HCT116 (cell line): ENCODE measurements at regions of chr2 and their contacts with region 1.

Region 1: GRCh38 chr2:96554293-96555145 is 18.0 kb downstream of the ARID5A start:
- DNase-seq: peak; percentile 26
- ATAC-seq: peak; percentile 39
- H3K4me3 ChIP-seq: no peak overlapping the region
- H3K27ac ChIP-seq: no peak overlapping the region; the same call in 1 of the 2 replicates
- H3K4me1 ChIP-seq: peaks cover 19 to 54% of the 10 kb centered on the region in 2 experiments
- H3K27me3 ChIP-seq: no peaks in the 10 kb centered on the region
- CTCF ChIP-seq: peak in 2 of 3 experiments; percentile 88 to 93; a peak in 4 of 6 replicates
- POLR2A ChIP-seq: no peak
- RAD21 ChIP-seq: no peak

Region 2: GRCh38 chr2:96536445-96537065 is 18.0 kb before region 1 on chr2 and contains the start of gene ARID5A:
- CTCF ChIA-PET with region 1: interaction called, 22 read pairs
- POLR2A ChIA-PET with region 1: no interaction called
- RAD21 ChIA-PET with region 1: interaction called in 1 of 2 experiments, 5 read pairs
- intact Hi-C with region 1: no loop called
- DNase-seq: peak; percentile 73
- ATAC-seq: peak; percentile 93
- H3K4me3 ChIP-seq: peak within 1 kb of the TSS; percentile 66 to 75
- H3K27ac ChIP-seq: peak within 1 kb of the TSS; percentile 36; the same call in 1 of the 2 replicates
- H3K4me1 ChIP-seq: peaks cover 20 to 69% of the 10 kb centered on the region in 2 experiments
- H3K27me3 ChIP-seq: no peaks in the 10 kb centered on the region
- CTCF ChIP-seq: peak in 1 of 3 experiments; percentile 27; a peak in 1 of 6 replicates
- POLR2A ChIP-seq: peak; percentile 45
- RAD21 ChIP-seq: no peak
- total RNA-seq, gene ARID5A: 8.2 TPM

Region 3: DNA sequence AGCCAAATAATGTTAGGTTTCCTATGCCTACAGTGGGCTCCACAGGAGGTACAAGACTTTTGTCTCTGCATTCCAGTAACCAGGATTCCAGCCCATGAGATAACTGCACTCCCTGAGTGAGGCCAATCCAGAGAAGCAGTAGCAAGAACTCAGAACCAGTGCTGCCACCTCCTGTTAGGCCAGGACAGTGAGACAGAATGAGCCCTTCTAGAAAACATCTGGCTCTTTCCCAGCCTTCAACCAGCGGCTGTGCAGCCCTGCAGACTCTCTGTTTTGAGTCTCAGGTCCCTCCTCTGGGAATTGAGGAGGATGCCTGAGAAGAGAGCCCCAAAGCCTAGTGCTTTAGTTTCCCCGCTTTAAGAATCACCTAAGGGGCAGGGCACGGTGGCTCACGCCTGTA is 26.3 kb after region 1 on chr2:
- CTCF ChIA-PET with region 1: interaction called, 14 read pairs
- POLR2A ChIA-PET with region 1: no interaction called
- RAD21 ChIA-PET with region 1: interaction called in 1 of 2 experiments, 4 read pairs
- intact Hi-C with region 1: loop called (anchors 1 kb)
- DNase-seq: peak; percentile 16
- ATAC-seq: peak; percentile 95
- H3K4me3 ChIP-seq: no peak overlapping the region
- H3K27ac ChIP-seq: no peak overlapping the region
- H3K4me1 ChIP-seq: no peaks in the 10 kb centered on the region
- H3K27me3 ChIP-seq: no peaks in the 10 kb centered on the region
- CTCF ChIP-seq: peak; percentile 39 to 68 (median 61); a peak in 5 of 6 replicates
- POLR2A ChIP-seq: no peak
- RAD21 ChIP-seq: peak; percentile 71

Region 4: GRCh38 chr2:96760036-96760985 is 205.8 kb after region 1 on chr2 and contains the start of gene CNNM4:
- CTCF ChIA-PET with region 1: interaction called, 3 read pairs
- POLR2A ChIA-PET with region 1: no interaction called
- RAD21 ChIA-PET with region 1: no interaction called
- intact Hi-C with region 1: loop called (anchors 10 kb)
- DNase-seq: peak; percentile 84
- ATAC-seq: peak; percentile 96
- H3K4me3 ChIP-seq: peak within 1 kb of the TSS; percentile 43 to 54
- H3K27ac ChIP-seq: peak within 1 kb of the TSS; percentile 62; the same call in 1 of the 2 replicates
- H3K4me1 ChIP-seq: peaks cover 14 to 50% of the 10 kb centered on the region in 2 experiments
- H3K27me3 ChIP-seq: no peaks in the 10 kb centered on the region
- CTCF ChIP-seq: 0 out of 6 replicates have a peak, but pooled peaks of 2 of the 3 experiments have one; percentile 5 to 11
- POLR2A ChIP-seq: peak; percentile 80
- RAD21 ChIP-seq: peak; percentile 26
- total RNA-seq, gene CNNM4: 7.9 TPM

Region 5: GRCh38 chr2:96801005-96801785 is 246.7 kb after region 1 on chr2:
- CTCF ChIA-PET with region 1: interaction called, 15 read pairs
- POLR2A ChIA-PET with region 1: no interaction called
- RAD21 ChIA-PET with region 1: no interaction called
- intact Hi-C with region 1: loop called (anchors 5 kb)
- DNase-seq: no peak
- ATAC-seq: peak; percentile 96
- H3K4me3 ChIP-seq: no peak overlapping the region
- H3K27ac ChIP-seq: no peak overlapping the region; the same call in 1 of the 2 replicates
- H3K4me1 ChIP-seq: peaks cover 0 to 5% of the 10 kb centered on the region in 2 experiments; a peak in 1 of 4 replicates
- H3K27me3 ChIP-seq: no peaks in the 10 kb centered on the region
- CTCF ChIP-seq: peak; percentile 53 to 87 (median 76); a peak in 5 of 6 replicates
- POLR2A ChIP-seq: no peak
- RAD21 ChIP-seq: peak; percentile 90

Region 6: DNA sequence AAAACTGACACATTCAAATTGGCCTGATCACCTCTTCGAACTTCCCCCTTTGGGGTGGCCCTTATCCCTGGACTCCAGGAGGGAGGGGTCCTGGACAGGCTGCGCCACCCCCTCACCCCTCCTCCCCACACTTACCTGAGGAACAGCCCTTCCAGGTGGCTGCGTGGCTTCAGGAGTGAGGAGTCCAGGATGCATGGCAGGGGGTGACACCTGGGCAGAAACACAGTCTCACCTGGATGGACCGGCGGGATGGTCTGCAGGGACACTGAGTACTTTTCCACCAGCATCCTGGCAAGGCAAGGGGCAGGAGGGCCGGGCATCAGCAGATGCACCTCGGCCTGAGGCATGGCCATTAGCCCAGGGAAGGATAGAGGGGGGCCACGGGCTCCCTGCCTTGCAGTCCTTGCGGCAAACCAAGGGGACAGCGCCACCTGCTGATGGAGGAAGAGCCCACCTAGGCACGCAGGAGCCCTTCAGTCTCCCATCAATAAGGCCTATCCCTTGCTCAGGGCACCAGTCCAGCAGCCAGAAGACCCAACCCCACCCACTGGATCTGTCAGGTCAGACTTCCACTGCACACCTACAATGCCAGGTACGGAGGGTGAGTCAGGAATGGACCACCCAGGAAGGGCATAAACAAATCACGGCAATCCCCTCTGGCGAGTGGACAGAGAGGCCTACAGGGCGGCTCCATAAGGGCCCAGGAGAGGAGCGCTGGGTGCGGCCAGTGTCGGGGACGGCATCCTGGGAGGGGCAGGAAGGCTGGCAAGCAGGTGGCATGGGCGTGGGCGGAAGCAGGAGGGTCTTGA is 405.8 kb after region 1 on chr2:
- CTCF ChIA-PET with region 1: no interaction called
- POLR2A ChIA-PET with region 1: no interaction called
- RAD21 ChIA-PET with region 1: no interaction called
- intact Hi-C with region 1: loop called (anchors 5 kb)
- DNase-seq: peak; percentile 79
- ATAC-seq: peak; percentile 99
- H3K4me3 ChIP-seq: no peak overlapping the region
- H3K27ac ChIP-seq: no peak overlapping the region
- H3K4me1 ChIP-seq: peaks cover 4 to 11% of the 10 kb centered on the region in 2 experiments; a peak in 2 of 4 replicates
- H3K27me3 ChIP-seq: no peaks in the 10 kb centered on the region
- CTCF ChIP-seq: peak; percentile 91 to 97 (median 93)
- POLR2A ChIP-seq: no peak
- RAD21 ChIP-seq: peak; percentile 96